ENCODE measurements at regions of chr3 and their contacts with region 1.

Region 1: GRCh38 chr3:73502609-73503583 is 121.8 kb downstream of the PDZRN3 start:
- DNase-seq: peak; percentile 57
- ATAC-seq: peak; percentile 65
- H3K4me3 ChIP-seq: no peak overlapping the region
- H3K27ac ChIP-seq: no peak overlapping the region
- H3K4me1 ChIP-seq: peaks cover 29% of the 10 kb centered on the region
- H3K27me3 ChIP-seq: no peaks in the 10 kb centered on the region
- CTCF ChIP-seq: peak; percentile 82 to 96 (median 94); a peak in 5 of 6 replicates
- EP300 ChIP-seq: no peak
- POLR2A ChIP-seq: no peak
- RAD21 ChIP-seq: peak; percentile 100

Region 2: DNA sequence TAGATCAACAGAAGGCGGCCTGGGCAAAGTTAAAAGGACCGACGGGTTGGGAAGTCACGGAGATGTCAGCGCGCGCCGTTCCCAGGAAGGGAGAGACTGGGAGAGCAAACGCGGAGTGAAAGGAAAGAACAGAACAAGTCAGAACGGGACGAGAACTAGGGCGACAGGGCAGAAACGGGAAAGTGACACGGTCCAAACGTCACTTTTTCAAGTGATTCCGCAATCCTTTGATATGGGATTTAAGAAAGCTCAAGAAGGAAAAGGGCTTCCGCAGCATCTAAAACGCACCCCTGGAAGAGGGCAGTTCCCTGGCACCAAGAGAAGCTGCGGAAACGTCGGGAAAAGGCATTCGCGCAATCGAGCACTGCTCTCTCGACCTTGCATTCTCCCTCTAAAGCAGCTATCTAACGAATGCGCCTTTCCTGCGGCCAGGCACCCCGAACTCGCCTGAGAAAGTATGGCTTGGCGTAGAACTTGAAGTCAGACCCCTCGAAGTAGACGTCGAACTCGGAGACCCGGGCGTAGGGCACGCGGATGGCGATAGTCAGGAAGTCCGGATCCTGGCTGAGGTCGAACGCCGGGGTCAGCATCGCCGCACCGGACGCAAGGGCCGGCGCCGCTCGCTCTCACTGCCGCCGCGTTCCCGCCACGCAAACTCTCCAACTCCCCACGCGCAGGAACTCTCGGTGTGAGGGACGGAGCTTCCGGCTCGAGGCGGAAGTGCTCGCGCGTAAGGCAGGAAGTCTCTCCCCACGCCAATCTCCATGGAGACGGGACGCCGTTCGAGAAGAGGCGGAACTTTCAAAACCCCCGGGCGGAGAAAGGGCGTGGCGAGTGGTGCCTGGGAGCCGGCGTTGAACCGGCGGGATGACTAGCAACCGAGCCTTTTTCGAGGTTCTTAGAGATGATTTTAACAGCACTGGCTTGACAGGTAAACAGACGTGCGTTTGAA is 654.9 kb before region 1 on chr3 and contains the start of gene SHQ1:
- CTCF ChIA-PET with region 1: no interaction called
- POLR2A ChIA-PET with region 1: no interaction called
- RAD21 ChIA-PET with region 1: interaction called, 3 read pairs
- SMC1A ChIA-PET with region 1: interaction called, 3 read pairs
- in situ Hi-C with region 1: no loop called
- intact Hi-C with region 1: loop called (anchors 5 kb)
- DNase-seq: peak; percentile 81
- ATAC-seq: peak; percentile 88
- H3K4me3 ChIP-seq: peak within 1 kb of the TSS; percentile 97
- H3K27ac ChIP-seq: peak within 1 kb of the TSS; percentile 79
- H3K4me1 ChIP-seq: peaks cover 35% of the 10 kb centered on the region
- H3K27me3 ChIP-seq: no peaks in the 10 kb centered on the region
- CTCF ChIP-seq: no peak
- EP300 ChIP-seq: no peak
- POLR2A ChIP-seq: peak; percentile 88
- RAD21 ChIP-seq: no peak
- polyA plus RNA-seq, gene SHQ1: 12.6 to 12.8 TPM

Region 3: GRCh38 chr3:73100741-73101559 is 401.9 kb before region 1 on chr3:
- CTCF ChIA-PET with region 1: interaction called, 91 read pairs
- POLR2A ChIA-PET with region 1: no interaction called
- RAD21 ChIA-PET with region 1: interaction called, 44 read pairs
- SMC1A ChIA-PET with region 1: interaction called, 30 read pairs
- in situ Hi-C with region 1: loop called (anchors 5 kb)
- intact Hi-C with region 1: loop called (anchors 1 kb)
- DNase-seq: peak; percentile 23
- ATAC-seq: peak; percentile 98
- H3K4me3 ChIP-seq: no peak overlapping the region
- H3K27ac ChIP-seq: no peak overlapping the region
- H3K4me1 ChIP-seq: no peaks in the 10 kb centered on the region
- H3K27me3 ChIP-seq: no peaks in the 10 kb centered on the region; a peak in 1 of 4 replicates
- CTCF ChIP-seq: peak; percentile 89 to 95 (median 95); a peak in 5 of 6 replicates
- EP300 ChIP-seq: no peak
- POLR2A ChIP-seq: no peak
- RAD21 ChIP-seq: peak; percentile 87

Region 4: GRCh38 chr3:73292220-73292619 is 210.7 kb before region 1 on chr3:
- CTCF ChIA-PET with region 1: no interaction called
- POLR2A ChIA-PET with region 1: no interaction called
- RAD21 ChIA-PET with region 1: no interaction called
- SMC1A ChIA-PET with region 1: no interaction called
- in situ Hi-C with region 1: no loop called
- intact Hi-C with region 1: loop called (anchors 10 kb)
- DNase-seq: no peak
- ATAC-seq: no peak
- H3K4me3 ChIP-seq: no peak overlapping the region
- H3K27ac ChIP-seq: no peak overlapping the region
- H3K4me1 ChIP-seq: no peaks in the 10 kb centered on the region
- H3K27me3 ChIP-seq: peaks cover 0 to 2% of the 10 kb centered on the region in 2 experiments; a peak in 1 of 4 replicates
- CTCF ChIP-seq: no peak
- EP300 ChIP-seq: no peak
- POLR2A ChIP-seq: no peak
- RAD21 ChIP-seq: no peak

Region 5: DNA sequence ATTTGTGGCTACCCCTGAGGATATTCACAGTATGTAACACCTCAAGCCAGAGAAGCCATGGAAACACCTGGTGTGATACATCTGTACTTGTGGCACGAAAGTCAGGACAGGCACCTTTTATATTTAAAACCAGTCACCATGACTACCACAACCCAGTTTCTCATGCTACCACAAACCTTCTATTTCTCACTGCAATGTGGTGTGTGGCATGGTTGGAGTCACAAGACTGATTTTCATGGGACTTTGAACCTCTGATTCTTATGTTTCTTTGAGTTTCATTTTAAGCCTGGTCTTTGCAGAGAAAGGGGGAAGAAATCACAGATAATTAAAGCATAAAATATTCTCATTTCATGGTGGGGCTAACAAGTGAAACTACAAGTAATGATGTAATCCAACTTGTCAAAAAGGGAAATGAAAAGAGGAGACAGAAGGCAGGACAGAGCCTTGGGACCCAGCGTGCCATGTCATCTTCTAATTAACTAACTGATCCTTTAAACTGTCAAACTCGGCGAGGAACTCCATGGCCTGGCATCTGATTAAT is 54.1 kb before region 1 on chr3:
- CTCF ChIA-PET with region 1: interaction called, 110 read pairs
- POLR2A ChIA-PET with region 1: no interaction called
- RAD21 ChIA-PET with region 1: interaction called, 23 read pairs
- SMC1A ChIA-PET with region 1: interaction called, 46 read pairs
- in situ Hi-C with region 1: loop called (anchors 5 kb)
- intact Hi-C with region 1: loop called (anchors 1 kb)
- DNase-seq: peak; percentile 94
- ATAC-seq: peak; percentile 87
- H3K4me3 ChIP-seq: peak overlapping the region; percentile 3; the same call in 1 of the 2 replicates
- H3K27ac ChIP-seq: peak overlapping the region; percentile 80
- H3K4me1 ChIP-seq: peaks cover 37% of the 10 kb centered on the region
- H3K27me3 ChIP-seq: no peaks in the 10 kb centered on the region
- CTCF ChIP-seq: no peak
- EP300 ChIP-seq: peak; percentile 86 to 99
- POLR2A ChIP-seq: no peak
- RAD21 ChIP-seq: no peak

Region 6: GRCh38 chr3:73484656-73485248 is 18.1 kb before region 1 on chr3:
- CTCF ChIA-PET with region 1: interaction called, 43 read pairs
- POLR2A ChIA-PET with region 1: no interaction called
- RAD21 ChIA-PET with region 1: no interaction called
- SMC1A ChIA-PET with region 1: interaction called, 7 read pairs
- in situ Hi-C with region 1: no loop called
- intact Hi-C with region 1: no loop called
- DNase-seq: peak; percentile 51
- ATAC-seq: peak; percentile 85
- H3K4me3 ChIP-seq: peak overlapping the region; percentile 47; the same call in 1 of the 2 replicates
- H3K27ac ChIP-seq: peak overlapping the region; percentile 50; the same call in 1 of the 2 replicates
- H3K4me1 ChIP-seq: peaks cover 17% of the 10 kb centered on the region
- H3K27me3 ChIP-seq: no peaks in the 10 kb centered on the region
- CTCF ChIP-seq: no peak
- EP300 ChIP-seq: no peak
- POLR2A ChIP-seq: no peak
- RAD21 ChIP-seq: no peak